K562 (cell line): ENCODE measurements at regions of chr17 and their contacts with region 1.

Region 1: GRCh38 chr17:73092523-73093135 is at the start of gene SLC39A11:
- DNase-seq: peak; percentile 92 to 95 (median 94)
- ATAC-seq: peak; percentile 97
- H3K4me3 ChIP-seq: peak within 1 kb of the TSS; percentile 67
- H3K27ac ChIP-seq: peak within 1 kb of the TSS; percentile 53
- H3K4me1 ChIP-seq: peaks cover 6 to 12% of the 10 kb centered on the region in 2 experiments; a peak in 3 of 5 replicates
- H3K27me3 ChIP-seq: peaks cover 14 to 24% of the 10 kb centered on the region in 2 experiments; a peak in 3 of 5 replicates
- CTCF ChIP-seq: no peak
- EP300 ChIP-seq: no peak
- POLR2A ChIP-seq: peak; percentile 82
- RAD21 ChIP-seq: no peak
- polyA plus RNA-seq, gene SLC39A11: 11.5 to 13.7 TPM

Region 2: DNA sequence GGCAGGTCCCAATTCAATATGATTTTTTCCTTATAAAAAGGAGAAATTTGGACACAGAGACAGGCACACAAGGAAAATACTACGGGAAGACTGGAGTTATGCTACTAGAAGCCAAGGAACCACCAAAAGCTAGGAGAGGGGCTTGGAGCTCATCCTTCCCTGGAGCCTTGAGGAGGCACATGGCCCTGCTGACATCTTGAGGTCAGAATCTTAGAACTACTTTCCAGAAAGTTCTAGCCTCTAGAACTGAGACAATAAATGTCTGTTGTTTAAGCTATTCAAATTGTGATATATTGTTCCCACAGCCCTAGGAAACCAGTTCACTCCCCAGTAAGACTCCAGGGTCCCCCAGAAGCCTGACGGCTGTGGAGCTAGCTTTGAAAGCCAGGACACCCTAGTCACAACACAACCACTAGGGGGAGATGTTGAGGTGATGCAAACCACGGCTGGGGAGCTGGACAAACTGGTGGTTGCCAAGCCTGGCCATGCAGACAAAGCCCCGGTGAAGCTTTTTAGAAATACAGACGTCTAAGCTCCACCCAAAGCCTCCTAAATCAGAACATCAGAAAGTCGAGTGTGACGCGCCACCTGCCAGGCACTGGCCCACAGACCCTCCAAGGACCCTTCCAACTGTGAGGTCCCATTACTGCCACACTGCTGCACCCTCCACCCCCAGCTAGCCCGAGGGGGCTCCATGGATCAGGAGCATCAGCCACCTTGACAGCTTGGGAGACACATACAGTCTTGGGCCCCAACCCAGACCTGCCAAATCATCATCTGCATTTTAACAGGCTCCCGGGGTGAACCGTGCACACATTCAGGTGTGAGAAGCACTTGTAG is 106.5 kb before region 1 on chr17:
- CTCF ChIA-PET with region 1: no interaction called
- POLR2A ChIA-PET with region 1: interaction called, 5 read pairs
- in situ Hi-C with region 1: no loop called
- intact Hi-C with region 1: loop called (anchors 10 kb)
- DNase-seq: peak; percentile 82 to 85 (median 84)
- ATAC-seq: peak; percentile 99
- H3K4me3 ChIP-seq: no peak overlapping the region
- H3K27ac ChIP-seq: no peak overlapping the region
- H3K4me1 ChIP-seq: peaks cover 0 to 7% of the 10 kb centered on the region in 2 experiments; a peak in 2 of 5 replicates
- H3K27me3 ChIP-seq: no peaks in the 10 kb centered on the region
- CTCF ChIP-seq: peak; percentile 84 to 89 (median 88)
- EP300 ChIP-seq: no peak
- POLR2A ChIP-seq: no peak
- RAD21 ChIP-seq: peak; percentile 60 to 85